Activated CD4-positive, alpha-beta T cell treated with anti-CD3 and anti-CD28 coated beads for 36 hours (primary cell): ENCODE measurements at regions of chr10 and their contacts with region 1.

Region 1: GRCh38 chr10:110774069-110775019 is 97.4 kb upstream of the PDCD4 start:
- DNase-seq: peak; percentile 67
- ATAC-seq: peak; percentile 94
- H3K4me3 Mint-ChIP-seq: peak overlapping the region; percentile 18
- H3K27ac Mint-ChIP-seq: peak overlapping the region; percentile 89
- H3K4me1 Mint-ChIP-seq: peaks cover 61% of the 10 kb centered on the region
- H3K27me3 Mint-ChIP-seq: peaks cover 2% of the 10 kb centered on the region

Region 2: GRCh38 chr10:110567201-110568054 is 206.9 kb before region 1 on chr10 and contains the start of gene SMC3:
- CTCF ChIA-PET with region 1: no interaction called
- POLR2A ChIA-PET with region 1: no interaction called
- intact Hi-C with region 1: loop called in 1 of 2 experiments (anchors 1 kb)
- DNase-seq: peak; percentile 95
- ATAC-seq: peak; percentile 84
- H3K4me3 Mint-ChIP-seq: peak within 1 kb of the TSS; percentile 93
- H3K27ac Mint-ChIP-seq: peak within 1 kb of the TSS; percentile 99
- H3K4me1 Mint-ChIP-seq: peaks cover 35% of the 10 kb centered on the region
- H3K27me3 Mint-ChIP-seq: peaks cover 13% of the 10 kb centered on the region
- total RNA-seq, gene SMC3: 76.8 to 83.5 TPM

Region 3: GRCh38 chr10:110864662-110865140 is 90.4 kb after region 1 on chr10:
- CTCF ChIA-PET with region 1: no interaction called
- POLR2A ChIA-PET with region 1: no interaction called
- intact Hi-C with region 1: loop called in 1 of 2 experiments (anchors 2 kb)
- DNase-seq: peak; percentile 65
- ATAC-seq: peak; percentile 78
- H3K4me3 Mint-ChIP-seq: peak overlapping the region; percentile 72
- H3K27ac Mint-ChIP-seq: peak overlapping the region; percentile 99
- H3K4me1 Mint-ChIP-seq: peaks cover 97% of the 10 kb centered on the region
- H3K27me3 Mint-ChIP-seq: no peaks in the 10 kb centered on the region

Region 4: GRCh38 chr10:110901954-110902819 is 127.8 kb after region 1 on chr10:
- CTCF ChIA-PET with region 1: no interaction called
- POLR2A ChIA-PET with region 1: no interaction called
- intact Hi-C with region 1: loop called in 1 of 2 experiments (anchors 1 kb)
- DNase-seq: peak; percentile 75
- ATAC-seq: peak; percentile 59
- H3K4me3 Mint-ChIP-seq: no peak overlapping the region
- H3K27ac Mint-ChIP-seq: peak overlapping the region; percentile 93
- H3K4me1 Mint-ChIP-seq: peaks cover 49% of the 10 kb centered on the region
- H3K27me3 Mint-ChIP-seq: no peaks in the 10 kb centered on the region

Region 5: DNA sequence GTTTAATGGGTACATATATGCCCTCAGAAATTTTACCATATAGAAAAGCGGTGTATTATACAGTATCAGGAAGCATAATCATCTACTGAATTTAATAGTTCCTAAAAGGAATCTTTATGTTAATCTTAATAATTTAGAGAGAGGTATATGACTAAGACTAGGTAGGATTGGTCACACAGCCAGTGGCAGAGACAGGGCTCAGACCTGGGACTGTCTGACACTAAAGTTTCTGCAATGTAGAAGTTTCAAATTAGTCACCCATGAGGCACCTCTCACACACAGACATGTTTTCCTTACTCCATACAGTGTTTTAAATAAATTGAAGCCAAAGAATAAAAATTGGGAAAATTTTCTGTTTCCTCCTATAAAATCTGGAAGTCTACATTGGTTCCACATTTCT is 229.7 kb after region 1 on chr10:
- CTCF ChIA-PET with region 1: no interaction called
- POLR2A ChIA-PET with region 1: no interaction called
- intact Hi-C with region 1: no loop called
- DNase-seq: peak; percentile 23
- ATAC-seq: peak; percentile 96
- H3K4me3 Mint-ChIP-seq: no peak overlapping the region
- H3K27ac Mint-ChIP-seq: no peak overlapping the region
- H3K4me1 Mint-ChIP-seq: peaks cover 3% of the 10 kb centered on the region
- H3K27me3 Mint-ChIP-seq: no peaks in the 10 kb centered on the region